ENCODE measurements at regions of chr19 and their contacts with region 1.

Region 1: DNA sequence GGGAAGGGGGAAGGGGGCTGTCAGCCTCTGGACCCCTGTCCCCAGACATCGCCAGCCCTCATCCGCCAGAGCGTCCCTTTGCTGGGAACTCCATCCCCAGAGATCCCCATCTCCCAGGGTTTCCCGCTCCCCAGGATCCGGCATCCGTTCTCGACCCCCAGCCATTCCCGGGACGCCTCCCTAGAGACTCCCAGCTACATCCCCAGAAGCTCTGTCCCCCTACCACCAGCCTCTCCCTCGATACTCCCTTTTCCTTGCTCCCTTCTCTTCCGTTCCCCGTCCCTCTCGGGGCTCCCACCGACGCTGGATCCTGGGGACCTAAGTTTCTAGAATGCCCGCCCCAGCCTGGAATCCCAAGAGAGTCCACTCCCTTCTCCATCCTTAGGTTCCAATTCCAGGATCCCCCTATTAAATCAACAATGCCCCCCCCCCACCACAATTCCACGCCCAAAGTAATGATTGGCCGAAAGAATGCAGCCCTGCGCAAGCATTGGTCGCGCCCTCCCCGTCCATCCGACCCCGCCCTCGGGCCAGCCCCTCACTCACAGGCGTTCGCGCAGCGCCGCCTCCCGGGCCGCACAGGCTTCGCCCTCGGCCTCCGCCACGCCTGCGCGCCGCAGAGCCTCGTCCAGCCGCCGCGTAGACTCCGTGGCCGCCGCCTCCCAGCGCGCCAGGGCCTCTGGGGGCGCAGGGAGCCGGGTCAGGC is 3.2 kb downstream of the CCDC194 start:
- DNase-seq: peak; percentile 94
- H3K4me3 Mint-ChIP-seq: peak overlapping the region; percentile 81
- H3K27ac Mint-ChIP-seq: no peak overlapping the region
- H3K4me1 Mint-ChIP-seq: peaks cover 26% of the 10 kb centered on the region
- H3K27me3 Mint-ChIP-seq: no peaks in the 10 kb centered on the region

Region 2: DNA sequence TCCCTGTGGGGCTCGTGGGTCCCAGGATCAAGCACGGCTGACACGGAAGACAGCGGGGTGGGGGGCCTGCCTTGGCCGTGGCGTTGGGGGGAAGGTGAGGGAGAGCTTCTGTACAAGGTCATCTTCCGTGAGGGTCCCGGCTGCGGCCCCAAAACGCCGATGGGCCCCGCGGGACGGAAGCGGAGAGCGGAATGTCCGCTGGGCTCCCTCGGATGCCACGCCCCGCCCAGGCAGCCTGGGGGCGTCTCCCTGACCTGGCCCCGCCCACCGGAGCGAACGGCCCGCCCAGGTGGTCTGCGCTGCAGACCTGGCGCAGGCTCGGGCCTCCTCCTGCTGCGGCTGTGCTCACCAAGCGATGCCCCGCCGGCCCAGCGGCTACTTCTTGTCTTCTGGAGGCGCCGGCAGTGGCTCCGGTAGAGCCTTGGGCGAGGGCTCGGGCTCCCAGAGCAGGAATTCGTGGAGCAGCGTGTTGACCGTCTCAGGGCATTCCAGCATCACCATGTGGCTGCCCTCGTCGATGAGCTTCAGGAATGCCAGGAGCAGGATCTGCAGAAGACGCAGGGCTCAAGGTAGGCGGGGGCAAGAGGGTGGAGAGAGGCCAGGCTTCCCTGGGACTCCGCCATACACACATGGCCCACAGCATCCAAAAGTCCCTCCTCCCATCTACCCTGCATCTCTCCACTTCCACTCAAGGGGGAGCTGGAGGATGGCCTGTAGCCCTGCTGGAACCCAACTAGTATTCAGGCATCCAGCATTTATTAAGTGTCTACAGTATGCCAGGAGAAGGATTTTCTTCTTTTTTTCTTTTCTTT is 98.3 kb before region 1 on chr19:
- CTCF ChIA-PET with region 1: interaction called, 24 read pairs
- POLR2A ChIA-PET with region 1: interaction called, 3 read pairs
- intact Hi-C with region 1: loop called (anchors 1 kb)
- DNase-seq: peak; percentile 86
- H3K4me3 Mint-ChIP-seq: peak overlapping the region; percentile 86
- H3K27ac Mint-ChIP-seq: peak overlapping the region; percentile 28
- H3K4me1 Mint-ChIP-seq: peaks cover 9% of the 10 kb centered on the region
- H3K27me3 Mint-ChIP-seq: peaks cover 3% of the 10 kb centered on the region

Region 3: DNA sequence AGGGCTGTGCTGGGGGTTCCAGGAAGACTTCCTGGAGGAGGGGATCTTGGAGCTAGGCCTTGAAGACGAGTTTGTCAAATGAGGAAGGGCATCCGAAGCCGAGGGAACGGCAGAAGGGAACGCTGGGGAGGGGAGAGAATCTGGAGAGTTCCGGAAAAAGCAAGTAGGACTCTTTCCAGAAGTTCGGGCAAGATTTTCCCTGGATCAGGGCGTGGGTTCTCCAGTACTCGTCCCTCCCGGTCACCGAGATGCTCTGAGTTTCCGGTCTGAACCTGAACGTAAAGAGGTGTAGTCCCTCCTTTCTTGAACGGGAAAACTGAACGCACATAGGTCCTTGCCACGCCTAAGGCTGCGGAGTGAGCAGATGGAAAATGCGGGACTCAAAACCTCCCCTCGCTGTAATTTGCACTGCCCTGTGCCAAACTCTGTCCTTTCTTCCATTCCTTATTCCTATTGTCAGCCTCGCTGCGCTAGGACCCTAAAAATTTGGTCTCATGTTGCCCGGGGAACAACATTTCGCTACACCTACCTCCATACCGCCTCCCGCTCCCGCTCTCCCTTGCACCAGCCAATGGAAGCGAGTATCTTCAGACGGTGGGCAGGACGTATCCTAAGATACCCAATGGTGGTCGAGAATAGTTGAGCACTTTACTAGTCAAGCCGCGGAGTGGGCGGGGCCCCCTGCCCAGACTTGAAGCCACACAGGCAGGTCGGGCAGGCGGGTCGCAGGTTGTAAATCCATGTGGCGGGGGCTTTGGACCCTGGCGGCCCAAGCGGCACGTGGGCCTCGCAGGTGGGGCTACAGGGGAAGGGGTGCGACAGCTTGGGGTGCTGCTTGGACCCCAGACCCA is 53.7 kb before region 1 on chr19 and contains the start of gene GTPBP3:
- CTCF ChIA-PET with region 1: interaction called, 8 read pairs
- POLR2A ChIA-PET with region 1: interaction called, 3 read pairs
- intact Hi-C with region 1: loop called (anchors 2 kb)
- DNase-seq: peak; percentile 98
- H3K4me3 Mint-ChIP-seq: peak within 1 kb of the TSS; percentile 93
- H3K27ac Mint-ChIP-seq: peak within 1 kb of the TSS; percentile 93
- H3K4me1 Mint-ChIP-seq: peaks cover 28% of the 10 kb centered on the region
- H3K27me3 Mint-ChIP-seq: no peaks in the 10 kb centered on the region
- total RNA-seq, gene GTPBP3: 37.7 to 41.4 TPM

Region 4: DNA sequence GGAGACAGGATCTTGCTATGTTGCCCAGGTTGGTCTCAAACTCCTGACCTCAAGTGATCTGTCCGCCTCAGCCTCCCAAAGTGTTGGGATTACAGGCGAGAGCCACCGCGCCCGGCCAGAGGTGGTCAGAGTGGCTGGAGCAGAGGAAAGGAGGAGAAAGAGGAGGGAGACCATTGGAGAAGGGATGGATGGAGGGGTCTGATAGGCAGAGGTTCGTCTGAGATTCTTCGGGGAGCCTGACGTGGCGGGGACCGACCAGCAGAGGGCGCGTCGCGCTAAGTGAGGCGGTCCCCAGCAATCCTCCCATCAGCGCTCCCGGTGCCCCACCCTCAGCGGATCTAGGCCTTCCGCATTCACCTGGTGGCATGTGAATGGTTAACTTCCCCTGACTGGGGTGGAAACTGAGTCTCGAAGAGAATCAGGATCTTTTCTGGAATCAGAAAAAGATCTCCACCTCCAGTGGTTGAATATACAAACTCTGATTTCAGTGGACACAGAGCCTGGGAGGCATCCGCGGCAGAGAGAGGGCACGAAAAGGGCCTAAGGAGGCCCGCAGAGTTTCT is 44.6 kb before region 1 on chr19:
- CTCF ChIA-PET with region 1: interaction called, 42 read pairs
- POLR2A ChIA-PET with region 1: no interaction called
- intact Hi-C with region 1: loop called (anchors 1 kb)
- DNase-seq: peak; percentile 87
- H3K4me3 Mint-ChIP-seq: no peak overlapping the region
- H3K27ac Mint-ChIP-seq: no peak overlapping the region
- H3K4me1 Mint-ChIP-seq: peaks cover 4% of the 10 kb centered on the region
- H3K27me3 Mint-ChIP-seq: peaks cover 4% of the 10 kb centered on the region

Region 5: DNA sequence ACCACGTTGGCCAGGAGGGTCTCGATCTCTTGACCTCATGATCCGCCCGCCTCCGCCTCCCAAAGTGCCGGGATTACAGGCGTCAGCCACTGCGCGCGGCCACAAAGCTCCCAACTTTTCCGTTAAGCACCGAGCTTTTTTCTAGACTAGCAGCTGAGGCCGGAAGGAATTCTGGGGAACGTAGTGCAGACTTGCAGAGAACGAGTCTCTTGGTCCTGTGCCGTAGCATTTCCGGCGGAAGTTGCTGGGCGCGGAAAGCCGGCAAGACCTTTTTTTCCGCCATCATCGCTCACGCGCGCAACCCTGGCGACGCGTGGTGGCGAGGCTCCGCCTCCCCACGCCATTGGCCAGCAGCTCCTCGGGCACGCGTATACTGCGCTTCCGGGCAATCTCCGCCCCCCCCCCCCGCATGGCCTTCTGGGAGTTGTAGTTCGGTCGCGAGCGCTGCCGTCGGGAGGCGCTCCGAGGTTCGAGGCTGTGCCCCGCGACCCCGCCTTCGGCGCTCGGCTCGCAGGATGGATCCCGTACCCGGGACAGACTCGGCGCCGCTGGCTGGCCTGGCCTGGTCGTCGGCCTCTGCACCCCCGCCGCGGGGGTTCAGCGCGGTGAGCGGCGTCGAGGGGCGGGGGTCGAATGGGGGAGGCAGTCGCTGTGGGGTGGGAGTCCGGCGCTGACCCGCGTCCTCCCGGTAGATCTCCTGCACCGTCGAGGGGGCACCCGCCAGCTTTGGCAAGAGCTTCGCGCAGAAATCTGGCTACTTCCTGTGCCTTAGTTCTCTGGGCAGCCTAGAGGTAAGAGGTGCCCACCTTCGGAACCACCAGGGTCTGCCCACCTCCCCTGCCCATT is 29.0 kb after region 1 on chr19 and contains the start of gene MVB12A:
- CTCF ChIA-PET with region 1: interaction called, 9 read pairs
- POLR2A ChIA-PET with region 1: no interaction called
- intact Hi-C with region 1: loop called (anchors 1 kb)
- DNase-seq: peak; percentile 98
- H3K4me3 Mint-ChIP-seq: peak within 1 kb of the TSS; percentile 86
- H3K27ac Mint-ChIP-seq: peak within 1 kb of the TSS; percentile 87
- H3K4me1 Mint-ChIP-seq: peaks cover 19% of the 10 kb centered on the region
- H3K27me3 Mint-ChIP-seq: no peaks in the 10 kb centered on the region
- total RNA-seq, gene MVB12A: 36.5 to 42.4 TPM